ENCODE measurements at regions of chr16 and their contacts with region 1.

Region 1: GRCh38 chr16:75011634-75012307 is 12.9 kb downstream of the ZNRF1 start:
- DNase-seq: peak; percentile 82
- H3K4me3 Mint-ChIP-seq: peak overlapping the region; percentile 58
- H3K27ac Mint-ChIP-seq: peak overlapping the region; percentile 89
- H3K4me1 Mint-ChIP-seq: peaks cover 53% of the 10 kb centered on the region
- H3K27me3 Mint-ChIP-seq: no peaks in the 10 kb centered on the region

Region 2: GRCh38 chr16:74807052-74807646 is 204.6 kb before region 1 on chr16:
- CTCF ChIA-PET with region 1: no interaction called
- POLR2A ChIA-PET with region 1: no interaction called
- intact Hi-C with region 1: no loop called
- DNase-seq: no peak
- H3K4me3 Mint-ChIP-seq: no peak overlapping the region
- H3K27ac Mint-ChIP-seq: no peak overlapping the region
- H3K4me1 Mint-ChIP-seq: no peaks in the 10 kb centered on the region
- H3K27me3 Mint-ChIP-seq: peaks cover 8% of the 10 kb centered on the region

Region 3: DNA sequence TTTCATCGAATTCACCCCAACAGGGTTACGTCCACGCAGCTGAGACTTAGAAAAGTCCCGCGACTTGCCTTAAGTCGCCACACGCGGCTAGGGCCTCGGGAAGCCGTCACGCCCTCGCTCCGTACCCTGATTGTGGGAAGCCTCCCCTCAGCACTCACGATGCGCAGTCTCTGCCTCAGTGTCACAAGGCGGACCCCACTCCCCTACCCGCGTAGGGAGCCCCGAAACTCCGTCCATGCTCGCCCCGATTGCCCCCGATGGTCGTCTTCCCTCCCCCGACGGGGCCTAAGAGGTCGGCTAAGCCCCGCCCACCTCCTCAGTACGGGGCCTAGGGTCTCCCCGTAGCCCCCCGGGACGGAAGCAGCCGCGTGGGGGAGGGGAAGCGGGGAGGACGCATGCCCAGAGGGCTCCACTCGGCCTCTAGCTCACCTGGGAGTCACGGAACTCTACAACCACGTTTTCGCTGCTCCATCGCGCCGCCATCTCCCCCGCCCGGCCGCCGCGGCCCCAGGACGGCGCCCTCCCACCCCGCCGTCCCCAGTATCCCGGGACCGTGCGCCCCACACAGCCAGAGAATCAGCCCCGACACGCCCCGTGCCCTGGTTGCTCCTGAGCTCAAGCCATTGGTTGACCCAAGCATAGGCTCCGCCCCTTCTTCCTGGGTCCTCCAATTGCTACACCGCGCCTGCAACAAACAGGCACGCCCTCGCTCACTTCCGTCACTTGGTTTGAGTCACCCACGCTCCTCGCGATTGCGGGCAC is 27.1 kb before region 1 on chr16 and contains the start of gene WDR59:
- CTCF ChIA-PET with region 1: interaction called, 9 read pairs
- POLR2A ChIA-PET with region 1: interaction called, 11 read pairs
- intact Hi-C with region 1: no loop called
- DNase-seq: peak; percentile 99
- H3K4me3 Mint-ChIP-seq: peak within 1 kb of the TSS; percentile 86
- H3K27ac Mint-ChIP-seq: peak within 1 kb of the TSS; percentile 74
- H3K4me1 Mint-ChIP-seq: peaks cover 19% of the 10 kb centered on the region
- H3K27me3 Mint-ChIP-seq: no peaks in the 10 kb centered on the region
- total RNA-seq, gene WDR59: 63.5 to 65.7 TPM

Region 4: DNA sequence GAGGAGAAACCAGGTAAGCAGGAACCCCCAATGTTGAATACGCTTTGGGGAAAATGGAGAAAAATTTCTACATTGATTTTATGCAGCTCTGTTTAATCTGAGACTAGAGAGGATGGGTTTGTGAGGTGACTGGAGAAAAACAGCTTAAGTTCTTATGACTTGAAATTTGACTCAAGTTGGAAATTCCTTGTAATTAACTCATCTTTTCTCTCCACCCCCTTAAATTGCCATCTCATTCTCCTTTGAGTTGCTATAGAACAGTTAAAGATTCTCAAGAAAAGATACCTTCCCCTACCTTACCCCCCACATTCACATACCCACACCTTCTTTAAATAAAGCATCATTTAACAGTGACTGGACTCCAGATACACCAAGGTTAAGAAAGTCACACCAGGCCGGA is 11.2 kb after region 1 on chr16:
- CTCF ChIA-PET with region 1: interaction called, 4 read pairs
- POLR2A ChIA-PET with region 1: interaction called, 13 read pairs
- intact Hi-C with region 1: loop called (anchors 1 kb)
- DNase-seq: no peak
- H3K4me3 Mint-ChIP-seq: no peak overlapping the region
- H3K27ac Mint-ChIP-seq: peak overlapping the region; percentile 85
- H3K4me1 Mint-ChIP-seq: peaks cover 35% of the 10 kb centered on the region
- H3K27me3 Mint-ChIP-seq: no peaks in the 10 kb centered on the region

Region 5: DNA sequence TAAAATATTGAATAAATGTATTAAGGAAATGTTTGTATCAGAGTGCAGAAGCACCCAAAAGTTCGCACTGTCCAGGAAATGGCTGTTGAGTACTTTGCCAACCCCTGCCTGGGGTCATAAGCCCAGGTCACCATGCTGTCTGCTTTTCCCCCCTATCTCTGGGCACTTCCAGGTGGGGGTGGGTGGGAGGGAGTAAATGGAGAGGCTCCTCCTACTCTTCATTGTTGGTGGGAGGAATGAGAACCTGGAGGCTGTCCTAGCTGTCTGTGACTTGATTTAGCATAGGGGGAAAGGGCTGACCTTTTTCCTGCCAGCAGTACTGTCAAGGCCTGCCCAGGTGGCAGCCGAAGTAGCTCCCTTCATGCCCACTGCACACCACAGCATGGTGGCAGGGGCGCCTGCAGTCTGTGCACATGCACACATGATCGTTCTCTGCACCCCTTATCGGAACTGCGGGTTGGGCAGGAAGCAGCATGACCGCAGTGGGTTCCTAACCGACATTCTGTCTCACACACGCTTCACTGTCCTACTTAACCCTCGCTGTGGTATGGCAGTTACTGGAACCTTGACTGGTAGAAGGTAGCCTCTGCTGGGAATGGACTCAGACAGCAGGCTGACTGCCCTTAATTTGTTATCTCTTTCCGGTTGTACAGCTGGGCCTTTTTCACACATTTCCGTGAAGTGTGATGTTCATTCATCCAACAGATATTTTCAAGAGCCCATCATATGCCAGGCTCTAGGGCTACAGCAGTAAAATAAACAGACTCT is 63.3 kb after region 1 on chr16:
- CTCF ChIA-PET with region 1: interaction called, 3 read pairs
- POLR2A ChIA-PET with region 1: interaction called, 10 read pairs
- intact Hi-C with region 1: loop called (anchors 1 kb)
- DNase-seq: peak; percentile 93
- H3K4me3 Mint-ChIP-seq: peak overlapping the region; percentile 52
- H3K27ac Mint-ChIP-seq: peak overlapping the region; percentile 91
- H3K4me1 Mint-ChIP-seq: peaks cover 42% of the 10 kb centered on the region
- H3K27me3 Mint-ChIP-seq: no peaks in the 10 kb centered on the region

Region 6: DNA sequence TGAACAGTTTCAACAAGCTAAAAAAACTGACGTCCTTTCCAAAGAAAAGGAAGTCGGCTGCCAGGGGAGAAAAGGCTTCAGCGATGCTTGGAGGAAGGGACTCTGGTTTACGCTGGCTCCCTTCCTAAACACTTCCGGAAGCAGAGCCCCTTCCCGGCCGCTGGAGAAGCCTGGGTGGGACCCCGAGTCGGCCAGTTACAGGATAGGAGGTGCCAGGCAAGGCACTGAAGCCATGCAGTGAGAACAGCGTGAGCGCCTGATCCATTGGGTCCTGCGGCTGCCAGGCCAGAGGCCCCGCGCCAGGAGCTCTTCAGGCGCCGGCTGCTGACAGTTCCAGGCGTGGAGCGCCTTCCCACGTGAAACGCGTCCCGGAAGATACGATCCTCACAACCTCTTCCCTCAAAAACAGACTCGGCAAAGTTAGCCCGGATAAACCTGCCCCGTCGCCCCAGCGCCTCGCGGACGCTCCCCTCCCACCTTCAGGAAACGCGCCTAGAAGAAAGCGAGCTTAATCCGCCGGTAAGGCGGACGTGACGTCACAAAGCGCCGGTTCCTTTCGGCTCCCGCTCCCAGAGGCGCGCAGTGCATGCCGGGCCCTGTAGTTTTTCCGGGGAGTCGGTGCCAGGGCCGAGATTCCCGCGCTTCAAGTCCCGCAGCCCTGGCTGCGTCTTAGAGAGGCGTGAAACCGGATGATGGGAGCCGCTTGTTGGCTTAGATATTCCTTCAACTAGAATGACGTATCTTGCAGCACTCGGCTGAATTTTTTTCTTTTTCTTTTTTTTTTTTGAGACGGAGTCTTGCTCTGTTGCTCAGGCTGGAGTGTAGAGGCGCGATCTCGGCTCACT is 611.2 kb after region 1 on chr16 and contains the start of gene ADAT1:
- CTCF ChIA-PET with region 1: no interaction called
- POLR2A ChIA-PET with region 1: no interaction called
- intact Hi-C with region 1: loop called (anchors 2 kb)
- DNase-seq: peak; percentile 99
- H3K4me3 Mint-ChIP-seq: peak within 1 kb of the TSS; percentile 96
- H3K27ac Mint-ChIP-seq: peak within 1 kb of the TSS; percentile 97
- H3K4me1 Mint-ChIP-seq: peaks cover 52% of the 10 kb centered on the region
- H3K27me3 Mint-ChIP-seq: no peaks in the 10 kb centered on the region
- total RNA-seq, gene ADAT1: 39.9 to 40.2 TPM